Uterus (tissue), 4 donors: ENCODE measurements at regions of chr20 and their contacts with region 1.

Region 1: DNA sequence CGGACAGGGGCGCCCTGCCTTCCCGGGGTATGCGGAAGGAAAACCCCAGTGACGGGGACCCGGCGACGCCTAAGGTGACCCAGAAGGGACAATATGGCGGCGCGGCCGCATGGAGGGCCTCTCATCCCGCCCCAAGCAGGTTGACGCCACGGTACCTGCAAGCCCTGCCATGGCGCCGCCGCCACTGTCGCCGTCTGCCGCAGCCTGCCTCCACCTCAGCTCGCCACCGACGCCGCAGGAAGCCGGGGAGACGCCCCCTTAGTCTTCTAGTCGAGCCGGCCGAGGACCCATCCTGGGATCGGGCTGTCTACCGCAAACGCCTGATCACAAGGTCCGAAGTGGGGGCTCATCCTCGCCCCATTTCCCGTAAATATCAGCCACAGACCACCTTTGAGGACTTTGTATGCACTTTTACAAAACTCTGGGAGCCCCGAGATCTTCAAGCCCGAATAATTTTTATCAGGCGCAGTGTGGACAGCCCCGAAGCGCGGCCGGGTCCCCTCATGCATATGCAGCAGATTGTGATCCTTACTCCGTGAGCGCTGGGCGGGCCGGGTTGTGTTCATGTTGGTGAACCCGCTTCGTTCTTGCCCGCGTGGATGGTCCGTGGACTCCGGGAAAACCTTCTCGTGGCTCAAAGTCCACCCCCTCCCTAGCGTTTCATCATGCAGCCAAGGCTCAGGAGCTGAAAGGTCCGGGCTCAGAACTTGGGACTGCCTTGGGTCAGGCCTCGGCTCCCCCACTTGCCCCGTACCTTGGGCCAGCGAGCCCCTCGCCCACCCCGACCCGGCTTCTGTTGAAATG is at the start of gene BLCAP:
- DNase-seq: peak; percentile 88 to 91
- H3K4me3 ChIP-seq: peak within 1 kb of the TSS; percentile 89 to 99
- H3K27ac ChIP-seq: peak within 1 kb of the TSS; percentile 92 to 98
- H3K4me1 ChIP-seq: peaks cover 0 to 4% of the 10 kb centered on the region in 2 donors
- H3K27me3 ChIP-seq: no peaks in the 10 kb centered on the region
- CTCF ChIP-seq: peak in 1 of 4 experiments; percentile 5
- POLR2A ChIP-seq: peak in 1 of 2 donors; percentile 67
- total RNA-seq, gene BLCAP: 16.4 to 62.9 (median 37.7) TPM

Region 2: DNA sequence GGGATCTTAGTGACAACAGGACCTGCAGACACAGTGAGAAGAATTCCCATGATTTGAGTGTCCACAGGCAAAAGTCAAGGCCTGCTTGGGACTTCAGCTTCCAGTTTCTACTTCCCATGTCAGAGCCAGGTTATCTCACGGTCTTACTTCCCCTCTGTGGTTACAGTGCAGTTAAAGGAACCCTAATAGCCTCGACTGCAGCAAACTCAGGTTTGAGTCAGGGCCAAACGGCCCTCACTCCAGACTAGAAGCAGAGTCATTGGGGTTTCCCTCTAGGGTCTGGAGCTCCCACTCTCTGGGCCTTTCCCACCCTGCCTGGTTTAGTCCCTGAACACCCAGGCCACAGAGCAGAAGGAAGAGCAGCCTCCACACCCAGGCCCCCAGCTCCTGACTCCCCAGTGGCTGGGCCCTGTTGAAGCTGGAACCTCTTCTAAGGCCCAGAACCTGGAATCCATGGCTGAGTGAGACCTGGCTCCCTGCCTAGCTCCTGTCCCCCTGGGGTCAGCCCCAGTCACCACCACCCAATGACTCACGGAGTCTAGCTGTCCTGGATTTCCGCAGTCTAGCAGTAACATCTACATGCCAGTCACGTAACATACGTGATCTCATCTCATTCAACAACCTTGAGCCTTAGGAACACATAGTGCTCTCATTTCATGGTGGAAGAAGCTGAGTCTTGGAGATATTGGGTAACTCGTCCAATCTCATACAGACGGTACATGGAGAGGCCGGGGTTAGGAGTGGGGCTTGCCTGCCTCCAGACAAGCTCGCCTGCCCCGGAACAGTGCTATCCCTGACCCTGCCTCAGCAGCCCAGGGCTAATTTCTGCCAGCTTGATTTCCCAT is 257.0 kb before region 1 on chr20:
- intact Hi-C with region 1: loop called (anchors 5 kb)
- DNase-seq: no peak
- H3K4me3 ChIP-seq: no peak overlapping the region
- H3K27ac ChIP-seq: no peak overlapping the region
- H3K4me1 ChIP-seq: no peaks in the 10 kb centered on the region
- H3K27me3 ChIP-seq: no peaks in the 10 kb centered on the region
- CTCF ChIP-seq: no peak
- POLR2A ChIP-seq: no peak

Region 3: DNA sequence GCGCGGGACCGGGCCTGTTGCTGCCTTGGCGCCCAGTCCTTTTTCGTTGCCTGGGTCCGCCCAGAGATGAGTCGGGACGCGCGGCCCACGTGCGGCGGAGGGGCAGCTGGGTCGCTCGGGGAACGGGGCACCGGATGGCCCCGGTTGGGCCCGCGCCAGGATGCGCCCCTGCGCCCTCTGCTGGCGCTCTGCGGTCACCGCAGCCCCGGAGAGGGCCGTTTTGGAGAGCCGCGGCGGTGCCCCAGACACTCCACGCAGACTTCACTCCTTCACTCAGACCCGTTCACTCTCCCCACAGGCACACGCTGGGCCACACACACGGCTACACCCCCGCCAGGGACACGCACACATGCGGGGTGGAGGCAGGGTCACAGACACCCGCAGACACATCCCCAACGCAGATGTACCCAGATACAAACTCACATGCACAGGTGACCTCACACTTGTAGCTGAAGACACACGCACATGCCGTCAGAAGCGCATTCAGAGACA is 143.1 kb before region 1 on chr20:
- intact Hi-C with region 1: loop called (anchors 10 kb)
- DNase-seq: peak; percentile 57 to 81
- H3K4me3 ChIP-seq: peak overlapping the region; percentile 2 to 46
- H3K27ac ChIP-seq: peak overlapping the region; percentile 20 to 59
- H3K4me1 ChIP-seq: peaks cover 0 to 5% of the 10 kb centered on the region in 2 donors
- H3K27me3 ChIP-seq: no peaks in the 10 kb centered on the region
- CTCF ChIP-seq: peak; percentile 77 to 97 (median 93)
- POLR2A ChIP-seq: peak in 1 of 2 donors; percentile 13